Naive thymus-derived CD4-positive, alpha-beta T cell (primary cell): ENCODE measurements at regions of chr13 and their contacts with region 1.

Region 1: DNA sequence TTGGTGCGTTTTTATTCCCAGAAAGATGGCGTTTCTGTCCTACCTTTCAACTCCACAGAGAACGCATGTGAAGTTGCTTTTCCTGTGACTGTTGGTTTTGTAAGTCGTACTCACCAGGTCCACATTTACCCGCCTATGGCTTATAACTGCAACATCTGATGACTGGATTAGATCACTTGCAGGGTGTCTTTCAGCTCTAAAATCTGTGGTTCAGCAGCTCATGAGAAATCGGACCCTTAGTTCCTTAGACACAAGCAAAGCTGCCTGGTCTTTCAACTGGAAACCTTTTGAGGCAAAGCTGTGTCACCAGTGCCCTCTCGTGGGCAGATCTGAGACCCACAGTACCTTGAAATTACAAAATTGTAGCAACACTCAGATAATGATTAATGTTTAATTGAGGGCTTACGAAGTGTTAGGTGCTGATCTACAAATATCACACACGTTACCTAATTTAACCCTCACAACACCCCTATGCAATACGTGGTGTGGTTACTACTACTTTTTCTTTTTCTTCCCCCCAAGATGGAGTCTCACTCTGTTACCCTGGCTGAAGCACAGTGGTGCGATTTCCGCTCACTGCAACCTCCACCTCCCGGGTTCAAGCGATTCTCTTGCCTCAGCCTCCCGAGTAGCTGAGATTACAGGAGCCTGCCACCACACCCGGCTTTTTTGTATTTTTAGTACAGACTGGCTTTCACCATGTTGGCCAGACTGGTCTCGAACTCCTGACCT is 65.4 kb downstream of the RUBCNL start:
- DNase-seq: peak; percentile 53 to 80 (median 75)
- ATAC-seq: peak; percentile 92
- H3K4me3 ChIP-seq: peak overlapping the region; percentile 39
- H3K4me3 Mint-ChIP-seq: peak overlapping the region; percentile 82 to 93 (median 86)
- H3K27ac ChIP-seq: peak overlapping the region; percentile 56
- H3K27ac Mint-ChIP-seq: peak overlapping the region; percentile 86 to 98 (median 95)
- H3K4me1 ChIP-seq: peaks cover 11 to 12% of the 10 kb centered on the region in 2 donors
- H3K4me1 Mint-ChIP-seq: peaks cover 23 to 48% (median 42%) of the 10 kb centered on the region in 7 donors
- H3K27me3 ChIP-seq: no peaks in the 10 kb centered on the region
- H3K27me3 Mint-ChIP-seq: no peaks in the 10 kb centered on the region

Region 2: GRCh38 chr13:45623515-45624090 is 698.1 kb before region 1 on chr13:
- CTCF ChIA-PET with region 1: interaction called, 3 read pairs
- POLR2A ChIA-PET with region 1: interaction called, 3 read pairs
- intact Hi-C with region 1: loop called in 1 of 2 experiments (anchors 1 kb)
- DNase-seq: peak in 4 of 9 donors; percentile 9 to 38 (median 20)
- ATAC-seq: no peak
- H3K4me3 ChIP-seq: no peak overlapping the region
- H3K4me3 Mint-ChIP-seq: no peak overlapping the region
- H3K27ac ChIP-seq: no peak overlapping the region
- H3K27ac Mint-ChIP-seq: no peak overlapping the region
- H3K4me1 ChIP-seq: no peaks in the 10 kb centered on the region
- H3K4me1 Mint-ChIP-seq: peaks cover 0 to 1% (median 0%) of the 10 kb centered on the region in 7 donors
- H3K27me3 ChIP-seq: no peaks in the 10 kb centered on the region
- H3K27me3 Mint-ChIP-seq: peaks cover 27 to 49% (median 38%) of the 10 kb centered on the region in 5 donors

Region 3: DNA sequence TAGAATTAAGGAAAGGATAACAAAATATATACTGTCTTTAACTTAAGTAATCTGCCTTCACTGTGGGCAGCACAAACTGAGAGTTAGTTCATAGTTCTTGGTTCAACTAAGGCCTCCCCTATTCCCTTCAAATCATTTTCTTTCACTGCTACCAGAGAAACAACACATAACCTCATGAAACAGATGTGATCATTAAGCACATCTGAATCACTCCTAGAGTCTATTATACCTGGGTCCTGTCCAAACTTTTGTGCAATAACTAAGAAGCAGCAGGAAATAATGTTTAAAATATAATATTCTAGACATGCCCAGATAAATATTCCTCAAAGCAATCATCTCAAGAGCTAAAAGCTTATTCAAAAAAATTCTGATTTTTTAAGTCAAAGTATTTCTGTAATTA is 332.1 kb before region 1 on chr13:
- CTCF ChIA-PET with region 1: interaction called, 3 read pairs
- POLR2A ChIA-PET with region 1: no interaction called
- intact Hi-C with region 1: loop called in 1 of 2 experiments (anchors 5 kb)
- DNase-seq: no peak
- ATAC-seq: no peak
- H3K4me3 ChIP-seq: no peak overlapping the region
- H3K4me3 Mint-ChIP-seq: no peak overlapping the region
- H3K27ac ChIP-seq: no peak overlapping the region
- H3K27ac Mint-ChIP-seq: no peak overlapping the region
- H3K4me1 ChIP-seq: no peaks in the 10 kb centered on the region
- H3K4me1 Mint-ChIP-seq: peaks cover 0 to 14% (median 8%) of the 10 kb centered on the region in 7 donors
- H3K27me3 ChIP-seq: no peaks in the 10 kb centered on the region
- H3K27me3 Mint-ChIP-seq: no peaks in the 10 kb centered on the region

Region 4: DNA sequence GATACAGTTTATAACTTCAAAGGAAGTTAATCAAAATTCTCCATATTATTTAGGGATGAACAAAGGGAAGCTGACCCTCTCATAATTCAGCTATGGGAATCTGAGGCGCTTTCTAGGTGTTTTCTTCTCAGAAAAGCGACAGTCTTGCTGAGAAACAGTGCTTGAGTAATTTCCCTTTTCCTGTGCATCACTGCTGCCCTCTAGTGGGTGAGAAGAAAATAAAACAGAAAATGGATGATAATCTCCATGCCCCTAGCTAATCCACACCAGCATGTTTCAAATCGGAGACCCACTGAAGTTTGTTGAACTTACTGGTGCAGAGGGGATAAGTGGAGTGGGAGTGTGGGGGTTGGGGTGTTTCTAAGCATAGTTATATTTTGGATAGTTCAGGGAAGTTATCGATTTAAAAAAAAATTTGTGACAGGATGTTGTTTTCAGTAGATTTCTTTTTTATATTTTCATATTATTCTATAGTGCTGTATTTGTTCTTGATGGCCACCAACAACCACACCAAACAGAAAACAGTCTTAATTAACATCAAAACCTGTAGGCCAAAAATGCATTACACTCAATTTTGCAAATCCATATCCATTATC is 161.1 kb before region 1 on chr13:
- CTCF ChIA-PET with region 1: interaction called, 23 read pairs
- POLR2A ChIA-PET with region 1: interaction called, 7 read pairs
- intact Hi-C with region 1: loop called (anchors 1 kb)
- DNase-seq: peak in 7 of 9 donors; percentile 59 to 78 (median 74)
- ATAC-seq: peak; percentile 91
- H3K4me3 ChIP-seq: no peak overlapping the region
- H3K4me3 Mint-ChIP-seq: peak overlapping the region; percentile 27 to 82 (median 74)
- H3K27ac ChIP-seq: peak overlapping the region; percentile 69
- H3K27ac Mint-ChIP-seq: peak overlapping the region; percentile 79 to 97 (median 91)
- H3K4me1 ChIP-seq: peaks cover 33 to 46% of the 10 kb centered on the region in 2 donors
- H3K4me1 Mint-ChIP-seq: peaks cover 49 to 58% (median 54%) of the 10 kb centered on the region in 7 donors
- H3K27me3 ChIP-seq: no peaks in the 10 kb centered on the region
- H3K27me3 Mint-ChIP-seq: no peaks in the 10 kb centered on the region

Region 5: GRCh38 chr13:46211483-46212351 is 109.9 kb before region 1 on chr13 and contains the start of gene LRRC63:
- CTCF ChIA-PET with region 1: interaction called, 7 read pairs
- POLR2A ChIA-PET with region 1: interaction called, 3 read pairs
- intact Hi-C with region 1: loop called (anchors 1 to 5 kb)
- DNase-seq: peak; percentile 69 to 88 (median 80)
- ATAC-seq: peak; percentile 98
- H3K4me3 ChIP-seq: peak within 1 kb of the TSS; percentile 81
- H3K4me3 Mint-ChIP-seq: peak within 1 kb of the TSS; percentile 83 to 100 (median 93)
- H3K27ac ChIP-seq: peak within 1 kb of the TSS; percentile 88
- H3K27ac Mint-ChIP-seq: peak within 1 kb of the TSS; percentile 91 to 98 (median 94)
- H3K4me1 ChIP-seq: peaks cover 5 to 8% of the 10 kb centered on the region in 2 donors
- H3K4me1 Mint-ChIP-seq: peaks cover 7 to 37% (median 26%) of the 10 kb centered on the region in 7 donors
- H3K27me3 ChIP-seq: no peaks in the 10 kb centered on the region
- H3K27me3 Mint-ChIP-seq: peaks cover 0 to 6% (median 0%) of the 10 kb centered on the region in 5 donors
- total RNA-seq, gene LRRC63: 0.19 to 0.80 (median 0.49) TPM

Region 6: DNA sequence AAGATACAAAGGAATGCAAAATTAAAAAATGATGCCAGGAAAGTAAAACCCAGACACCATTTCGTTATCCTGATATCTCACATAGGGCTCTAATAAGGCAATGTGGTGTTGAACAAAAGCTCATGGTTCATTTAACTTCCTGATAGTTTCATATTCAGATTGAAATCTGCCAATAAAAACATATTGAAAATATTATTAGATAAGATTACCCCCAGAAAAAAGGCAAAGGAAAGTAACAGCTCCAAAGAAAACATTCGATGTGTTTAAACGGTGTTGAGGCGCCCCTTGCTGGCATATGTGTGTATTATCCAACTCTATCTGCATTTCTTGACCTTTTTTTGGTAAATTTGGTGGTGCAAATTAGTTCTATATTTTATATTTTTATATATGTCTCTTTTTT is 399.4 kb after region 1 on chr13:
- CTCF ChIA-PET with region 1: no interaction called
- POLR2A ChIA-PET with region 1: no interaction called
- intact Hi-C with region 1: loop called in 1 of 2 experiments (anchors 1 kb)
- DNase-seq: peak in 7 of 9 donors; percentile 10 to 54 (median 44)
- ATAC-seq: peak; percentile 61
- H3K4me3 ChIP-seq: no peak overlapping the region
- H3K4me3 Mint-ChIP-seq: no peak overlapping the region
- H3K27ac ChIP-seq: no peak overlapping the region
- H3K27ac Mint-ChIP-seq: no peak overlapping the region
- H3K4me1 ChIP-seq: no peaks in the 10 kb centered on the region
- H3K4me1 Mint-ChIP-seq: peaks cover 0 to 5% (median 0%) of the 10 kb centered on the region in 7 donors
- H3K27me3 ChIP-seq: no peaks in the 10 kb centered on the region
- H3K27me3 Mint-ChIP-seq: no peaks in the 10 kb centered on the region